Panc1 (cell line): ENCODE measurements at regions of chr11 and their contacts with region 1.

Region 1: DNA sequence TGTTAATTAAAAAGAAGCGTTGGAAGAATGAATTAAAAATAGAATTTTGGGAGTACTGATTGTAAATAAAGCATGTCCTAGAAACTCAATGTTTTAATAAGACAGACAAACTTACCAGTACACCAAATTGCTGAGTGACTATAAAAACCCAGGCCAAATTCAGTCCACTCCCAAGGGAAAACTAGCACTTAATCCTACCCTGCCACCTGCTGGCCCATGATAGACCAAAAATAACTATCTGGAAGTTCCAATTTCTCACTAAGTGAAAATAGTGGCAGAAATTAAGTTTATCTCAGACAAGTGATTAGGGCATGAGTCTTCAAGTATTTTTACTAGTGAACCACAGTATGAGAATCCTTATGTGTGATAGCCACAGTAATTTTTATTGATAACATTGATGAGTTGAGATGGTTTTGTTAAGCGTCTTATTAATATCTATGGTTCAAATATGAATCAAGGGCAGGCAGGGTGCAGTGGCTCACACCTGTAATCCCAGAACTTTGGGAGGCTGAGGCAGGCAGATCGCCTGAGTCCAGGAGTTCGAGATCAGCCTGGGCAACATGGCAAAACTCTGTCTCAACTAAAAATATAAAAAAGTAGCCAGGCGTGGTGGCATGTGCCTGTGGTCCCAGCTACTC is 9.8 kb upstream of the DDX10 start:
- DNase-seq: peak; percentile 51
- ATAC-seq: peak; percentile 94
- H3K4me3 ChIP-seq: no peak overlapping the region
- H3K27ac ChIP-seq: no peak overlapping the region
- H3K4me1 ChIP-seq: no peaks in the 10 kb centered on the region
- H3K27me3 ChIP-seq: no peaks in the 10 kb centered on the region
- CTCF ChIP-seq: peak; percentile 83

Region 2: GRCh38 chr11:108117746-108118371 is 537.3 kb before region 1 on chr11:
- CTCF ChIA-PET with region 1: no interaction called
- POLR2A ChIA-PET with region 1: no interaction called
- in situ Hi-C with region 1: no loop called
- intact Hi-C with region 1: loop called (anchors 5 kb)
- DNase-seq: no peak
- ATAC-seq: no peak
- H3K4me3 ChIP-seq: no peak overlapping the region
- H3K27ac ChIP-seq: no peak overlapping the region
- H3K4me1 ChIP-seq: peaks cover 13% of the 10 kb centered on the region
- H3K27me3 ChIP-seq: no peaks in the 10 kb centered on the region
- CTCF ChIP-seq: peak; percentile 82

Region 3: DNA sequence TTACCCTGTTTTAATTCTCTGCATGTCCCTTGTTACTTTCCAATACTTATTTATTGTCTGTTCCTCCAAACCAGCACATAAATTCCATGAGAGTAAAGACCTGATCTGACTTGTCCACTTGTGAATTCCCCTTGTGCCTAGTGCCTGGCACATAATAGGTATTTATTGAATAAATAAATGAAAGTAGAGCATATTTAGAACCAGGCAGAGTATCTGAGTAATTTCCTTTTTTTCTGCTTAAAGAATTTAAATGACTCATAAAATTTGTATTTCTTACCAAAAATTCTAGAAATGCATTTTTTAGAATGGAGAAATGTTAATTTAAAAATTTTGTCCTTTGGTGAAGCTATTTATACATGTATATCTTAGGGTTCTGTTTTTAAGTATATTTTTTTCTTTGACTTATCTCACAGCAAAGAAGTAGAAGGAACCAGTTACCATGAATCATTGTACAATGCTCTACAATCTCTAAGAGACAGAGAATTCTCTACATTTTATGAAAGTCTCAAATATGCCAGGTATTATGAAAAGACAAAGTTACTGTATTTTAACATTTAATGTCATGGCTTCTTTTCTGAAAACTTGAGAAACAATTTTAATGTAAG is 335.5 kb before region 1 on chr11:
- CTCF ChIA-PET with region 1: no interaction called
- POLR2A ChIA-PET with region 1: no interaction called
- in situ Hi-C with region 1: no loop called
- intact Hi-C with region 1: loop called (anchors 10 kb)
- DNase-seq: no peak
- ATAC-seq: no peak
- H3K4me3 ChIP-seq: no peak overlapping the region
- H3K27ac ChIP-seq: no peak overlapping the region
- H3K4me1 ChIP-seq: no peaks in the 10 kb centered on the region
- H3K27me3 ChIP-seq: no peaks in the 10 kb centered on the region
- CTCF ChIP-seq: no peak

Region 4: GRCh38 chr11:108414958-108415357 is 240.2 kb before region 1 on chr11:
- CTCF ChIA-PET with region 1: no interaction called
- POLR2A ChIA-PET with region 1: no interaction called
- in situ Hi-C with region 1: no loop called
- intact Hi-C with region 1: loop called (anchors 2 kb)
- DNase-seq: no peak
- ATAC-seq: no peak
- H3K4me3 ChIP-seq: no peak overlapping the region
- H3K27ac ChIP-seq: no peak overlapping the region
- H3K4me1 ChIP-seq: no peaks in the 10 kb centered on the region
- H3K27me3 ChIP-seq: no peaks in the 10 kb centered on the region
- CTCF ChIP-seq: no peak

Region 5: GRCh38 chr11:108501396-108501795 is 153.7 kb before region 1 on chr11:
- CTCF ChIA-PET with region 1: no interaction called
- POLR2A ChIA-PET with region 1: no interaction called
- in situ Hi-C with region 1: no loop called
- intact Hi-C with region 1: loop called (anchors 5 kb)
- DNase-seq: no peak
- ATAC-seq: no peak
- H3K4me3 ChIP-seq: no peak overlapping the region
- H3K27ac ChIP-seq: no peak overlapping the region
- H3K4me1 ChIP-seq: peaks cover 9% of the 10 kb centered on the region
- H3K27me3 ChIP-seq: no peaks in the 10 kb centered on the region
- CTCF ChIP-seq: no peak

Region 6: DNA sequence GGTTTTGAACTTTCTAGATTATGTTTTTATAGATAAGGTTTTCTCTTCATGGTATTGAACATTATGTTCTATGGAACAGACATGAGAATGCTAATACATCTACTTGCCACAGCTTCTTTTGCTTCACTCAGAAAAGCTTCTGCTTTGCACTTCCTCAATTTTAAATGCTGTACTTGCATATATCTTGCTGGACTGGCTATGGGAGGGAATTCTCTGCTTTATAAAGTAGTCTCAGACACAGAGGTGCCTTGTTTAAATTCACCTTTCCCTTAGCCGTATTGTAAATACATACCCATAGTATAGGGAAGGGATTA is 183.6 kb after region 1 on chr11:
- CTCF ChIA-PET with region 1: no interaction called
- POLR2A ChIA-PET with region 1: no interaction called
- in situ Hi-C with region 1: no loop called
- intact Hi-C with region 1: no loop called
- DNase-seq: no peak
- ATAC-seq: no peak
- H3K4me3 ChIP-seq: no peak overlapping the region
- H3K27ac ChIP-seq: no peak overlapping the region
- H3K4me1 ChIP-seq: no peaks in the 10 kb centered on the region
- H3K27me3 ChIP-seq: no peaks in the 10 kb centered on the region
- CTCF ChIP-seq: no peak